ENCODE measurements at regions of chr15 and their contacts with region 1.

Region 1: DNA sequence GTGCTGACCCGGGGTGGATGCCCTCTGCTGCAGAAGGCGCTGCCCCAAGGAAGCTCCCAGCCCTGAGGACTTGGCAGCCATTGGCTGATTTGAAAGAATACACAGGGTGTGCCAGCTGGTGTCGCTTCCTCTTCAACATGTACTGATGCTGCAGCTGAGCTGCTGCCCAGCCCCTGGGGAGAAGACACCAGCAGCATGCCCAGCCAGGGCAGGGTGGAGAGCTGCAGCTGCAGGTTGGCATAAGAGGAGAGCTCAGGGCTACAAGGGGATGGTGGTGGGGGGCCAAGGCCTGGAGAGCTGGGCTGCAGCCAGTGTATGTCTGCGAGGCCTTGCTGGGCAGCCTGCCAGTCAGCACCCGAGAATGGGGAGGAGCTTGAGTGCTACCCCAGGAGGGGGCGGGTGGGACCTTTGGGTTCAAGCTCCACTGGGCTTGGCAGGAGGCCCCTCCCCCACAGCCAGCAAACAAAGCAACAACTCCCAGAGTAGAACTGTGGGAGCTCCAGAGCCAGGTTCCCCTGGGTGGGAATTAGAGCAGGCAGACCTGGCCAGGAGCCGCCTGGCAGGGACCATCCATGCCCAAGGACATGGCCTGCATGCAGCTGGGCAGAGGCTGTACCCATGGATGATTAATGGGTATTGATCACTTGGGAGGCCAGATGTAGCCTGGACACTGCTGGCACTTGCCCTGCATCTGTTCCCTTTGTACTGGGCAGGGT is 9.2 kb upstream of the SEMA4B start:
- DNase-seq: peak; percentile 92
- H3K4me3 Mint-ChIP-seq: peak overlapping the region; percentile 58
- H3K27ac Mint-ChIP-seq: peak overlapping the region; percentile 88
- H3K4me1 Mint-ChIP-seq: peaks cover 31% of the 10 kb centered on the region
- H3K27me3 Mint-ChIP-seq: no peaks in the 10 kb centered on the region
- CTCF ChIP-seq: no peak

Region 2: GRCh38 chr15:90221246-90221900 is 29.4 kb after region 1 on chr15:
- CTCF ChIA-PET with region 1: interaction called, 43 read pairs
- POLR2A ChIA-PET with region 1: interaction called, 99 read pairs
- intact Hi-C with region 1: no loop called
- DNase-seq: peak; percentile 75
- H3K4me3 Mint-ChIP-seq: no peak overlapping the region
- H3K27ac Mint-ChIP-seq: no peak overlapping the region
- H3K4me1 Mint-ChIP-seq: no peaks in the 10 kb centered on the region
- H3K27me3 Mint-ChIP-seq: no peaks in the 10 kb centered on the region
- CTCF ChIP-seq: peak; percentile 90

Measured in MCF 10A (cell line).